Activated CD8-positive, alpha-beta T cell treated with anti-CD3 and anti-CD28 coated beads, Interleukin-2, amount 10 ng/mL, durations not matched to agents 7 days and 5 days (primary cell): ENCODE measurements at regions of chr4 and their contacts with region 1.

Region 1: DNA sequence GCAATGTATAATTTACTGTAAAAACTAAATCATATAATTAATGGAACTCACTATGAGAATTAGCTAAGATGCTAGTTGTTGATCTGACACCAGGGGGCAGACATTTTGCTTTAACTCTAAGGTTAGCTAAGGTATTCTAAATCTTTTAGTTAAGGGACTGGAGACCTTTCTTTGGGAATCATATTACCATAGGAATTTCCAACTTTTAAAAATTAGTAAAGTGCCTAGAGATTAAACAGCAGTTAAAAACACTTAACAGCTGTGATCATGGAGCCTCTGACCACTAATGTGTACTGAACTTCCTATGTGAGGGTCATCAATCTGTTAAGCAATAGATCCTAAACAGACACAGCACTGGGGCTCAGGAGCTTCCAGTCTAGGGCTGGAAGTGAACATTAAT is 226.6 kb downstream of the NSUN7 start:
- DNase-seq: peak; percentile 45
- ATAC-seq: no peak
- H3K4me3 Mint-ChIP-seq: no peak overlapping the region
- H3K27ac Mint-ChIP-seq: no peak overlapping the region
- H3K4me1 Mint-ChIP-seq: no peaks in the 10 kb centered on the region
- H3K27me3 Mint-ChIP-seq: peaks cover 2% of the 10 kb centered on the region

Region 2: GRCh38 chr4:40788331-40788730 is 188.0 kb before region 1 on chr4:
- CTCF ChIA-PET with region 1: no interaction called
- POLR2A ChIA-PET with region 1: no interaction called
- DNase-seq: no peak
- ATAC-seq: no peak
- H3K4me3 Mint-ChIP-seq: no peak overlapping the region
- H3K27ac Mint-ChIP-seq: no peak overlapping the region
- H3K4me1 Mint-ChIP-seq: no peaks in the 10 kb centered on the region
- H3K27me3 Mint-ChIP-seq: peaks cover 23% of the 10 kb centered on the region

Region 3: GRCh38 chr4:40986375-40986774 is 10.0 kb after region 1 on chr4:
- CTCF ChIA-PET with region 1: interaction called, 10 read pairs
- POLR2A ChIA-PET with region 1: no interaction called
- DNase-seq: no peak
- ATAC-seq: no peak
- H3K4me3 Mint-ChIP-seq: no peak overlapping the region
- H3K27ac Mint-ChIP-seq: no peak overlapping the region
- H3K4me1 Mint-ChIP-seq: no peaks in the 10 kb centered on the region
- H3K27me3 Mint-ChIP-seq: peaks cover 6% of the 10 kb centered on the region

Region 4: DNA sequence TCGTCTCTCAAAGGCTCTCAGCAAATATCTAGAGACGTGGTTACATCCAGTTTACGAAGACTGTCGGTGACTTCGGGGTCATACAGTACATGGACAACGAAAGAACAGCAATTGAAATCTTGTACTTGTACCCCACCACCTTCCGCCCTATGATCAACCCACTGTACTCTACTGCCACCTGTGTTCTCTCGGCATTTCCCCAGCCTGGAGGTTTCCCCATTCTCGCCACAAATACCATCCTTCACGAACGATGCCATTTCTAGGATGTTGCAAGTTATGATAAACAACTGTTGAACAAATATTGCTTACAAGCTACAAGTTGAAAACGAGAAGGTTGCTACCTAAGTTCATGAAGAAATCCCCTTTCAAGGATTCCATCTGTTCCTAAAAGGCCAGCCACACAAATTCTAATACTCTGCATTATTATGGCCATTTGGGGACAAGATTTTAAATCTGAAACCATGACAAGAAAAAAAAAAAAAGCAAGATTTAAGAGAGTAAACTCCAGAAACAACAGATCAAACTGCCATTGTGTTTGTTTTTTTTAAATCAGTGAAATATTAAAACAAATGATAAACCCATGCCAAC is 236.4 kb after region 1 on chr4:
- CTCF ChIA-PET with region 1: interaction called, 11 read pairs
- POLR2A ChIA-PET with region 1: no interaction called
- DNase-seq: no peak
- ATAC-seq: no peak
- H3K4me3 Mint-ChIP-seq: no peak overlapping the region
- H3K27ac Mint-ChIP-seq: no peak overlapping the region
- H3K4me1 Mint-ChIP-seq: peaks cover 29% of the 10 kb centered on the region
- H3K27me3 Mint-ChIP-seq: peaks cover 39% of the 10 kb centered on the region